MCF 10A (cell line): ENCODE measurements at regions of chr10 and their contacts with region 1.

Region 1: DNA sequence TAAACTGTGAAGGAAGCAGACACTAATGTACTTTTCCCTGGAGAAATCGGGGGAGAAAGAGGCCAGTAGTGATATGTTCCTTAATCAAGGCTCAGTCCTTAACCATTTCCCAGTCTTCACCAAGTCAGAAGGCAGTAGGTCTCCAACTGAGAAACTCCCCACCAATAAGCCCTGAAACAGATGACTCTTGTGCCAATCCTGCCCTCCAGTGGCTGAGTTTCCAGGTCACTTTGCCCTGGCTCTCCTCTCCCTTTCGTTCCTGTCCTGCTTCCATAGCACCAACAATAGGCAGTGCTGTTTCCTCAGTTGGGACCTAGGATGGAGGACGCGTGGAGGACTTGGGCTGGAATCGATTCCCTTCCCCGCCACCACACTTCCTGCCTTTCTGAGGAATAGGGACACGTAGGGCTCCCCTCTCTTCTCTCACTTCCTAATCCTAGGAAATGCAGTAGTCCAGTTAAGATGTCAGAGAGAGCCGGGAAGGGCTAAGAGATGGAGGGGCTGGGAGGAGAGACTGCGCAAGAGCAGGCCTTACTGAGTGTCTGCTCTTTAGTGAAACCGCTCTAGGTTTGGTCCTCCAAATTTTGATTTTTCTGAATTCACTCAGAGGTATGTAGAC is 23.4 kb downstream of the ATOH7 start:
- DNase-seq: peak; percentile 79
- H3K4me3 Mint-ChIP-seq: no peak overlapping the region
- H3K27ac Mint-ChIP-seq: no peak overlapping the region
- H3K4me1 Mint-ChIP-seq: no peaks in the 10 kb centered on the region
- H3K27me3 Mint-ChIP-seq: no peaks in the 10 kb centered on the region
- CTCF ChIP-seq: peak; percentile 59

Region 2: GRCh38 chr10:68082872-68083271 is 125.7 kb before region 1 on chr10:
- CTCF ChIA-PET with region 1: interaction called, 11 read pairs
- POLR2A ChIA-PET with region 1: no interaction called
- intact Hi-C with region 1: loop called (anchors 1 kb)
- DNase-seq: peak; percentile 51
- H3K4me3 Mint-ChIP-seq: no peak overlapping the region
- H3K27ac Mint-ChIP-seq: no peak overlapping the region
- H3K4me1 Mint-ChIP-seq: peaks cover 15% of the 10 kb centered on the region
- H3K27me3 Mint-ChIP-seq: no peaks in the 10 kb centered on the region
- CTCF ChIP-seq: peak; percentile 40

Region 3: GRCh38 chr10:68223535-68224165 is 15.1 kb after region 1 on chr10:
- CTCF ChIA-PET with region 1: interaction called, 35 read pairs
- POLR2A ChIA-PET with region 1: no interaction called
- intact Hi-C with region 1: no loop called
- DNase-seq: no peak
- H3K4me3 Mint-ChIP-seq: no peak overlapping the region
- H3K27ac Mint-ChIP-seq: no peak overlapping the region
- H3K4me1 Mint-ChIP-seq: peaks cover 6% of the 10 kb centered on the region
- H3K27me3 Mint-ChIP-seq: no peaks in the 10 kb centered on the region
- CTCF ChIP-seq: no peak

Region 4: DNA sequence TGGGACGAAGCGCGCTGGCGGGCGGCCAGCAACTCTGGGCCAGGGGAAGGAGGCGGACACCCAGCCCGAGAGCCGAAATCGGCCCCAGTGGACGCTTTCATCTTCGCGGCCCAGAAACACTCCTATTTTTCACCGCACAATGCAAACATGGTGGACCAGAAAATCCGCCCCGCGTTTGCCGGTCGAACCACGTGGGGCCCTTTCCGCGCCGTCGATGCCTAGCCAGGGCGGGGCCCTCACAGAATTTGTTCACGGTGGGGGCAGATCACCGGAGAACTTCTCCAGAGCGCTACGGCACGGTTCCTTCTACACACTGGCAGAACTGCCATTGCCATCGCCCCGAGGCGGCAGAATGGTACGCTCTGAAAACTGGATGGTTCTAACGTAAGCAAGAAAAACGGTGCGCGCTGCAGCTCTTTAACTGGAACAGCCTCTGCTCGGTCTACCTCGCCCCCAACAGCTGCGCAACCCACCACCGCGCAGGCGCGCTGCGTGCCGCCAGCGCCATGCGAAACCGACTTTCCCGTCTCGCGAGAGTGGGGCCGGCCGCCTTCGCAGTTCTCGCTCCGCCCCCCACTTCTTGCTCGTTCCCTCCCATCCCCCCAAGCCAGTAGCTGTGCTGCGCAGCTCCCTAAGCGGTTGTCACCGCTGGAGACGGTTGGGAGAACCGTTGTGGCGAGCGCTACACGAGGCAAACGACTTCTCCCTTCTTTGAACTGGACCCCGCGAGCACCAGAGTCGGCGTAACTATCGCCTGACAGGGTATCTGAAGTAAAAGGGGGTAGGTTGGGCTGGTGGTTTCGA is 123.1 kb after region 1 on chr10 and contains the start of gene HNRNPH3:
- CTCF ChIA-PET with region 1: interaction called, 14 read pairs
- POLR2A ChIA-PET with region 1: interaction called, 24 read pairs
- intact Hi-C with region 1: no loop called
- DNase-seq: peak; percentile 97
- H3K4me3 Mint-ChIP-seq: peak within 1 kb of the TSS; percentile 97
- H3K27ac Mint-ChIP-seq: peak within 1 kb of the TSS; percentile 99
- H3K4me1 Mint-ChIP-seq: peaks cover 29% of the 10 kb centered on the region
- H3K27me3 Mint-ChIP-seq: no peaks in the 10 kb centered on the region
- CTCF ChIP-seq: no peak
- total RNA-seq, gene HNRNPH3: 216 and 285 TPM in 2 replicates

Region 5: GRCh38 chr10:68348265-68348741 is 139.8 kb after region 1 on chr10:
- CTCF ChIA-PET with region 1: interaction called, 7 read pairs
- POLR2A ChIA-PET with region 1: no interaction called
- intact Hi-C with region 1: loop called (anchors 1 kb)
- DNase-seq: peak; percentile 60
- H3K4me3 Mint-ChIP-seq: no peak overlapping the region
- H3K27ac Mint-ChIP-seq: no peak overlapping the region
- H3K4me1 Mint-ChIP-seq: no peaks in the 10 kb centered on the region
- H3K27me3 Mint-ChIP-seq: no peaks in the 10 kb centered on the region
- CTCF ChIP-seq: peak; percentile 58

Region 6: DNA sequence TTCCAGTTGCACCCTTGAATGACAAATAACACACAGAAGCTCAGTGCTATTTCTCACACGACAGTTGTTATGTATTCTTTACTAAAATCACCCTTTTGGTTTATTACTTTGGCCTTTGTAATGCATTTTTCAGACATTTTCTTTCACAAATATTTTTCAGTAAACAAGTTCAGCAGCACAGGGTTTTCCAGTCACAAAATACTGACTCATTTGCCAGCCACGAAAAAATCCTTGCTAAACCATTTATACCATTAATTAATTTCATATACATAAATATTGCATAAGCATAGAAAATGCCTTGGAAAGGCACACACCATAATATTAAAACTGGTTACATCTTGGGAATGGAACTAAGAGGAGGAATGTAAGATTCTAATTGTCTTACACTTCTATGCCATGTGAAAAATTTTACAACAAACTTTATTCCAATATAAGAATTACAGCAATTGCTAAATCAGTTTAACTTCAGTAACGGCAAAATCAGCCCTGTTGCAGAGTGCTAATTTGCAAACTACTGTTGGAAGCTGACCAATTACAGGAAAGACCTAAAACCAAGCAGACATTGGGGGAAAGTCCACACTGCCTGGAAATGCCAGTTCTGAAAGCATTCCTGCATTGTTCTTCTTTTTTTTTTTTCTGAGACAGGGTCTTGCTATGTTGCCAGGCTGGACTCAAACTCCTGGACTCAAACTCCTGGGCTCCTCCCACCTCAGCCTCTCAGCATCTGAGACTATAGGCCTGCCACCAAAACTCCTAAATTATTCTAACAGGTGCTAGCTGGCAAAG is 155.8 kb after region 1 on chr10:
- CTCF ChIA-PET with region 1: no interaction called
- POLR2A ChIA-PET with region 1: no interaction called
- intact Hi-C with region 1: no loop called
- DNase-seq: no peak
- H3K4me3 Mint-ChIP-seq: no peak overlapping the region
- H3K27ac Mint-ChIP-seq: no peak overlapping the region
- H3K4me1 Mint-ChIP-seq: peaks cover 6% of the 10 kb centered on the region
- H3K27me3 Mint-ChIP-seq: no peaks in the 10 kb centered on the region
- CTCF ChIP-seq: no peak